B cell (primary cell): ENCODE measurements at regions of chr9 and their contacts with region 1.

Region 1: GRCh38 chr9:91884696-91885687 is 65.0 kb downstream of the ROR2 start:
- DNase-seq: no peak
- ATAC-seq: no peak
- H3K4me3 ChIP-seq: no peak overlapping the region
- H3K4me3 Mint-ChIP-seq: no peak overlapping the region
- H3K27ac ChIP-seq: no peak overlapping the region
- H3K27ac Mint-ChIP-seq: no peak overlapping the region
- H3K4me1 ChIP-seq: no peaks in the 10 kb centered on the region
- H3K4me1 Mint-ChIP-seq: no peaks in the 10 kb centered on the region
- H3K27me3 ChIP-seq: no peaks in the 10 kb centered on the region
- H3K27me3 Mint-ChIP-seq: peaks cover 8% of the 10 kb centered on the region
- CTCF ChIP-seq: no peak

Region 2: GRCh38 chr9:91775011-91775707 is 109.8 kb before region 1 on chr9:
- CTCF ChIA-PET with region 1: no interaction called
- POLR2A ChIA-PET with region 1: no interaction called
- intact Hi-C with region 1: loop called (anchors 10 kb)
- DNase-seq: peak; percentile 66
- ATAC-seq: peak; percentile 58
- H3K4me3 ChIP-seq: no peak overlapping the region
- H3K4me3 Mint-ChIP-seq: no peak overlapping the region
- H3K27ac ChIP-seq: no peak overlapping the region
- H3K27ac Mint-ChIP-seq: no peak overlapping the region
- H3K4me1 ChIP-seq: peaks cover 0 to 4% of the 10 kb centered on the region in 2 donors
- H3K4me1 Mint-ChIP-seq: no peaks in the 10 kb centered on the region
- H3K27me3 ChIP-seq: peaks cover 0 to 7% (median 1%) of the 10 kb centered on the region in 4 experiments
- H3K27me3 Mint-ChIP-seq: peaks cover 31% of the 10 kb centered on the region
- CTCF ChIP-seq: peak; percentile 84